ENCODE measurements at regions of chr15 and their contacts with region 1.

Region 1: GRCh38 chr15:85742186-85742821 is 52.4 kb downstream of the KLHL25 start:
- DNase-seq: no peak
- H3K4me3 ChIP-seq: no peak overlapping the region
- H3K27ac ChIP-seq: peak overlapping the region in 2 of 4 donors; percentile 18 to 33
- H3K4me1 ChIP-seq: peaks cover 0 to 23% (median 19%) of the 10 kb centered on the region in 4 donors
- H3K27me3 ChIP-seq: no peaks in the 10 kb centered on the region
- CTCF ChIP-seq: no peak
- EP300 ChIP-seq: no peak
- POLR2A ChIP-seq: no peak

Region 2: DNA sequence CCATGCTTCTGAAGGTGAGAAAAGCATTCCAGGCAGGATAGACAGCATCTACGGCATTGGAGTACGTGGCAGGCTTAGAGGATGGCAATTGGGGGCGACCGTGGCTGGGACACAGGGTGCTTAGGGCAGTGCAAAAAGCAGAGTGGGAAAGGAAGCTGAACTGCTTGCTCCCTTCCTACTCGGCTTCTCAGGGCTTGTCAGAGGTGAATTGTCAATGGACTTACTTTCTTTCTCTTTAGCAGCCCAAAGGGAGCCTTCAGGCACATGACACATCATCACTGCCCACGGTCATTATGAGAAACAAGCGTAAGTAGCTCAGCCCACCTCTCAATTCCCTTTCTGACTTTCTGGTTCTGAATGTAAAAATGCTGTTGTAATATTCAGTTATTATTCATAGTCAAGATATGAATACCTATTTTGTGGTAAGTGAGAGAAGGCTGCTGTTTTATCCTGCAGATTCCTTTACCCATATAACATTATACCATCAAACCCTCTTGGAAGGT is 31.9 kb before region 1 on chr15:
- intact Hi-C with region 1: loop called (anchors 2 kb)
- DNase-seq: no peak
- H3K4me3 ChIP-seq: no peak overlapping the region
- H3K27ac ChIP-seq: no peak overlapping the region
- H3K4me1 ChIP-seq: peaks cover 0 to 20% (median 17%) of the 10 kb centered on the region in 4 donors
- H3K27me3 ChIP-seq: no peaks in the 10 kb centered on the region
- CTCF ChIP-seq: no peak
- EP300 ChIP-seq: no peak
- POLR2A ChIP-seq: no peak

Region 3: DNA sequence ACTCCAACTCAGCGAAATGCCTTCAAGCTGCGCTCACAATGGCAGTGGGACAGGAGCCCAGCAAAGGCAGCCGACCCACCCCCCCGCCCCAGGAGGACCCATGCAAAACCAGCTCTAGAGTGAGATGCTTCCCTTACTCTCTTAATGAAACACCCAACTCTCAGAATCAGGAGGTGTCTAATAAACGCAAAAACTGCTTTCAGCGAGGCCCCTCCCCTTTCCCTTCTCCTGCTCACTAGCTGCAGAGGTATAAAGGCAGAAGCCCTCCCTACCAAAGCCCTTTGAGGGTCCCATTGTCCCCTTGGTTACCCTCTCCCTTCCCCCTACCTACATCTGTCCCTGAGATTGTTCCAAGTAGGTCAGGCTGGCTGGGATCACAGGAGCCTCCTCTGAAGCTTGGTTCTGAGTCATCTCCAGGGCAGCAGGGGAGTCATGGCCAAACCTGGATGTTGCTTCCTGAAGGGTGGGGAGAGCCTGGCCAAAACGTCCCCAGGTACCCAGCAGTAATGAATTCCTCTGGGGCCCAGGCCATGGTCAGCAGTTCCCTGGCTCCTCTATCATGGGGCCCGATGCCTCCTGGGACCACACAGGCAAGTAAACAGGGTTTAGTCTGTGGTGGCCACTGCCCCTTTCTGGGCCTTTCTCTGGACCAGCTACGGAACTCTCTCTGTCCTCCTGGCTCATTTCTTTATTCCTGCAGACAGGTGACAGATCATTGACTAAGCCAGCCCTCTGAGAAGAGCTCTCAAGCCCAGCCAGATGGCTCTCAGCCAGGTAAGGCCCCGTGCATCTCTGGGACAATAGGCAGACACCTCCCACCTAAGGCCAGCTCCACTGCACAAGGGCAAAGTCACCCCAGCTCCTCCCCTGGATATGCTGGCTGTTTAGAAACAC is 43.8 kb after region 1 on chr15:
- intact Hi-C with region 1: loop called (anchors 2 kb)
- DNase-seq: no peak
- H3K4me3 ChIP-seq: no peak overlapping the region
- H3K27ac ChIP-seq: peak overlapping the region in 3 of 4 donors; percentile 7 to 67 (median 65)
- H3K4me1 ChIP-seq: peaks cover 0 to 20% (median 19%) of the 10 kb centered on the region in 4 donors
- H3K27me3 ChIP-seq: no peaks in the 10 kb centered on the region
- CTCF ChIP-seq: no peak
- EP300 ChIP-seq: no peak
- POLR2A ChIP-seq: no peak

Region 4: GRCh38 chr15:85849946-85850345 is 107.6 kb after region 1 on chr15:
- intact Hi-C with region 1: no loop called
- DNase-seq: no peak
- H3K4me3 ChIP-seq: no peak overlapping the region
- H3K27ac ChIP-seq: no peak overlapping the region
- H3K4me1 ChIP-seq: no peaks in the 10 kb centered on the region
- H3K27me3 ChIP-seq: no peaks in the 10 kb centered on the region
- CTCF ChIP-seq: no peak
- EP300 ChIP-seq: no peak
- POLR2A ChIP-seq: no peak